OCI-LY7 (cell line): ENCODE measurements at regions of chr12 and their contacts with region 1.

Region 1: DNA sequence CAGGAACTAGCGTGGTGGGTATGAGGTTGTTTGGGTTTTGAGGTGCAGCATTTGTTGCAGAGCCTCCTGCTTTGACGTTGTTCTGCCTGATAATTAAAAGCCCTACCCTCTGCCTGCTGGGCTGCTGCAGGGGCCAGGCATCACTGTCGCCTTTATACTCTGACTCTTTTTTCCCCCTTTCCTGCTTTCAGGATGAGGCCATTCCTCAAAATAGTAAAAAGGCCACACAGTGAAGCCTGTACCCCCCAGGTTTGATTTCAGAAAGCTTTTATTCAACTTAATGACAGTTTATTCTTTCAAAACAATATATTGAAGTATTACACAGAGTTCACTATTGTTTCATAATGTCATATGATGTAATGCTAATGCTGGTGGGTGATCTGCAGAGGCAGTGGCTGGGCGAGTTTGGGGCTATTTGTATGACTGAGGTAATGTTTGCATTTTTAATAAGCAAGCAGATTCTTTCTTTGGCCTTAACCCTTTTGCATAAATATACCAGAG is 9.1 kb downstream of the BORCS5 start:
- DNase-seq: no peak
- H3K4me3 ChIP-seq: no peak overlapping the region
- H3K27ac ChIP-seq: no peak overlapping the region
- H3K4me1 ChIP-seq: no peaks in the 10 kb centered on the region
- CTCF ChIP-seq: no peak

Region 2: GRCh38 chr12:12425616-12426015 is 59.6 kb after region 1 on chr12:
- CTCF ChIA-PET with region 1: no interaction called
- POLR2A ChIA-PET with region 1: no interaction called
- intact Hi-C with region 1: loop called (anchors 5 kb)
- DNase-seq: no peak
- H3K4me3 ChIP-seq: no peak overlapping the region
- H3K27ac ChIP-seq: no peak overlapping the region
- H3K4me1 ChIP-seq: no peaks in the 10 kb centered on the region
- CTCF ChIP-seq: no peak